ENCODE measurements at regions of chr7 and their contacts with region 1.

Region 1: DNA sequence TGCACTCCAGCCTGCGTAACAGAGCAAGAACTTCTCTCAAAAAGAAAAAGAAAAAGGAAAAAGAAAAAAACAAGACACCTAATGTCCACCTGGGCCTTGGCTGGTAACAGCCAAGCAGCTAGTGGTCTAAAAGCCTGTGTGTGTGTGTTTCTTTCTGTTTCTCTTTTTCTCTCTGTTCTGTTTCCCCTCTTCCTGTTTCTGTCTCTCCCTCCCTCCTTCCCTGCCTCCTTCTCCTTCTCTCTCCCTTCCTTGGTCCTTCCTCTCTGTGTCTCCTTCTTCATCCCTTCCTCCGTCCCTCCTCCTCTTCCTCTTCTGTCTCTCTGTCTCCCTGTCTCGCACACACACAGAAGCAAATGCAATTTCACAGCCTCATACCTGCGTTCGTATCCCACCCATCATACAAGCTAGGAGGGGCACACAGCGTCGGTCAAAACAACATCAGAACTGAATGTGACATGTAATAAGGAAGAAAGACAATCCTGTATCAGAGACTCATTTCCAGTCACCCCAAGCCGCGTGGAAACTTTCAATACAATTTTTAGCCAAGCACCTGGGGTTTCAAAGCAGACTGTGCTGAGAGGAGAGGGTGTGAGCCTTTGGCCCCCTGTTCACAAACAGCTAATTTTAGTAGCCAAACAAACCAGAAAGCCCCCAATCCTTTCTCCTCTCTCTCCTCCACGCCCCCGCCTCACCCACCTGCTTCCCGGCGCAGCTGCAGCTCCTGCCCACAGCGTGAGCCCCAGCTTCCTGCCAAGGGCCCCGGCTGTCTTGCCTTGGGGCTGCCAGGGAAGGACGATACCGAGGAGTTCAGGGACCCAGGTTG is 50.2 kb upstream of the GNA12 start:
- DNase-seq: peak; percentile 84
- H3K4me3 Mint-ChIP-seq: peak overlapping the region; percentile 73
- H3K27ac Mint-ChIP-seq: peak overlapping the region; percentile 94
- H3K4me1 Mint-ChIP-seq: peaks cover 23% of the 10 kb centered on the region
- H3K27me3 Mint-ChIP-seq: no peaks in the 10 kb centered on the region

Region 2: GRCh38 chr7:2266908-2267307 is 627.4 kb before region 1 on chr7:
- CTCF ChIA-PET with region 1: no interaction called
- POLR2A ChIA-PET with region 1: no interaction called
- intact Hi-C with region 1: no loop called
- DNase-seq: no peak
- H3K4me3 Mint-ChIP-seq: no peak overlapping the region
- H3K27ac Mint-ChIP-seq: no peak overlapping the region
- H3K4me1 Mint-ChIP-seq: peaks cover 3% of the 10 kb centered on the region
- H3K27me3 Mint-ChIP-seq: no peaks in the 10 kb centered on the region

Region 3: GRCh38 chr7:2956526-2957368 is 62.4 kb after region 1 on chr7:
- CTCF ChIA-PET with region 1: no interaction called
- POLR2A ChIA-PET with region 1: no interaction called
- intact Hi-C with region 1: loop called (anchors 2 kb)
- DNase-seq: peak; percentile 79
- H3K4me3 Mint-ChIP-seq: no peak overlapping the region
- H3K27ac Mint-ChIP-seq: peak overlapping the region; percentile 91
- H3K4me1 Mint-ChIP-seq: peaks cover 65% of the 10 kb centered on the region
- H3K27me3 Mint-ChIP-seq: no peaks in the 10 kb centered on the region

Measured in activated CD4-positive, alpha-beta memory T cell treated with anti-CD3 and anti-CD28 coated beads for 36 hours (primary cell).